Activated T-helper 1 cell treated with anti-CD3 and anti-CD28 coated beads, Interleukin-12 subunit alpha, Interleukin-12 subunit beta, Interleukin-2, Interleukin-4 antibody, amounts not matched to agents 30 ng/mL and 10 ng/mL and 1 ng/mL, durations not matched to agents 14 hours and 24 hours and 36 hours (primary cell): ENCODE measurements at regions of chr5 and their contacts with region 1.

Region 1: DNA sequence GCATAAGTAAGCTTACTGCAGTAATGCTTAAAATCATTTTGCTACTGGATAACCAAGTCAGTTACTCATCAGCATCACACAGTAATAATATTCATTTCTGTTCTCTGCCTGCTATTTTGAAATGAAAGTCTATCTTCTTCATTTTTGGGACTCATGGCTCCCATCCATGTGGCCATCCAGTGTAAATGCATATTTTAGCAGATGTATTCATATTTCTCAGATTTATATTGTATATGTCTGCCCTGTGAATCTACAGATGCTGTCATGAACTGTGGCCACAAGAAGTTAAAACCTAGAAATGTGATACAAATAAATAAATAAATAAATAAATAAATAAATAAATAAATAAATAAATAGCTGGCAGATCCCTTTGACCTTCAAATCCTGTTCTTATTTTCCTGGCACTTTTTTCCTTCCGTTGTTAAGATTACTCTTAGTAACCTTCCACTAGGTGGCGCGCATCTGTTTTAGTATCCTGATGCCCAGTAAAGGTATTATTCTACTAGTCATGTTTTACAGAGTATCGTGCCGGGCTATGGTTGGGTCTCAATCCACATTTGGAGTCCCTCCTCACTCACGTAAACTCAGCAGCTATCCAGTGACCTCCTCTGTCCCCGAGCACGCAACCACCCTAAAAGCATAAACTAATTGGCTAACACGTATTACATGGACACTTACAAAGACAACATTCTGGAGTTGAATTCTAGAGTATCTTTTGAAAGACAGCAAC is 79.2 kb upstream of the IL7R start:
- DNase-seq: peak; percentile 53
- H3K4me3 Mint-ChIP-seq: no peak overlapping the region
- H3K27ac Mint-ChIP-seq: peak overlapping the region; percentile 30
- H3K4me1 Mint-ChIP-seq: peaks cover 70% of the 10 kb centered on the region
- H3K27me3 Mint-ChIP-seq: no peaks in the 10 kb centered on the region

Region 2: DNA sequence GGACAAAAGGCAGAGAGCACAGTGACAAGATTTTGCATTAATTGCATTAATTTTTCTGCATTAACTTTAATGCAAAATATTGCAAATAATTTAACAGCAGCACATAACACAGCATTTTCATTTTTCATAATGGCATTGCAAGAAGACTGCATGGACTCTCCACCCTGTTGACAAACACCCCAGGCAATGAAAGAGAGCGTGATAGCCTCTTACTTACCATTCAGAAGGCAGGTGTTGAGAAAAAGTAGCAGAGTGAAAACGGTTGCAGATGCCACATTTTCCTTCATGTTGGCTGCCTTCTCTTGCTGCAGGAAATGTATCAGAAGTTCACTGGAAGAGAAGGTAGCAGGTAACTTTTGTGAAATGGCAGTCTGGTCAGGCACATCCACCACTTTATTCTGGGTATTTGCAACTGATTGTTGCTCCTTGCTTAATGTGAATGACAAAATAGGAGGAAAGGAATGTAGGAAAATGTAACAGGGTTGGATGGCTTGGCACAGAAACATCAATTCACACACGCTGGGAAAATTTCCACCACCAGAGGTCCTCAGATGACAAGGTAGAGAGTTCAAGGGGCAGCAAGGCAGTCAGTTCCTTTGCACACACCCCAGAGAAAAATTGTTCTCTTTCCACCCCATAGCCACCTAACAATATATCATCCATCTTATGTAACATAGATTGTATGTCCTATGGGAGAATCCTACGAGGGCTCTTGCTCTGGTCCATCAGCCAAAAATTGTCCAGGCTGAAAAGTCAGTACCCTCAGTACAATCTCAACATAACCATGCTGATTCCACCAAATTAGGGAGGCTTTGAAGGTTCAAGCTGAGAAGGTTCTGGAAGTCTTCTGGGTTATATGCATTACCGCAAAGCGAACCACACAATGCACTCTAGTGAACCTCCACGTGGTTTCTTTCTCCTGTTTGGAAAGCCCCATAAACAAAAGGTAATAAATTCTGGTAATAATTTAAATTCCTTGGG is 687.9 kb before region 1 on chr5:
- intact Hi-C with region 1: loop called (anchors 10 kb)
- DNase-seq: peak; percentile 15
- H3K4me3 Mint-ChIP-seq: no peak overlapping the region
- H3K27ac Mint-ChIP-seq: no peak overlapping the region
- H3K4me1 Mint-ChIP-seq: no peaks in the 10 kb centered on the region
- H3K27me3 Mint-ChIP-seq: peaks cover 4% of the 10 kb centered on the region

Region 3: GRCh38 chr5:35554016-35554415 is 223.5 kb before region 1 on chr5:
- intact Hi-C with region 1: no loop called
- DNase-seq: no peak
- H3K4me3 Mint-ChIP-seq: no peak overlapping the region
- H3K27ac Mint-ChIP-seq: no peak overlapping the region
- H3K4me1 Mint-ChIP-seq: no peaks in the 10 kb centered on the region
- H3K27me3 Mint-ChIP-seq: peaks cover 2% of the 10 kb centered on the region

Region 4: DNA sequence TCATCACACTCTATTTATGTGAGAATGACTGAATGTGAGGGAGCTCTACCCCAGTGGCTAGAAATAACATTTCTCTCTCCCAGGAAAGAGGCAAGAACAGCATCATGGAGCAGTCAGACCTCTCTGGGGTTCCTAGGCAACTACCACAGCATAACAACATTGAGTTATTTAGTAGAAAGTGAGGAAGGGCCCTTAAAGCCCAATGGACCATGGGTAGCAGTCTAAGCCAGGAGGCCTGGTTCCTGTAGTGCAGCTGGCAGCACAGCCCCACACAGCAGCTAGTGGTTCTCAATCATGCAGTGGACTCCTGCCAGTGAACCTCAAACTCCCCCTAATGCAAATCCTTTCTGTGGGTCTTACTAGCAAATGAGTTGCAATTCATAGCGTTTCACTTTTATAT is 104.5 kb before region 1 on chr5:
- intact Hi-C with region 1: loop called (anchors 1 kb)
- DNase-seq: peak; percentile 29
- H3K4me3 Mint-ChIP-seq: peak overlapping the region; percentile 10
- H3K27ac Mint-ChIP-seq: peak overlapping the region; percentile 59
- H3K4me1 Mint-ChIP-seq: peaks cover 65% of the 10 kb centered on the region
- H3K27me3 Mint-ChIP-seq: no peaks in the 10 kb centered on the region

Region 5: DNA sequence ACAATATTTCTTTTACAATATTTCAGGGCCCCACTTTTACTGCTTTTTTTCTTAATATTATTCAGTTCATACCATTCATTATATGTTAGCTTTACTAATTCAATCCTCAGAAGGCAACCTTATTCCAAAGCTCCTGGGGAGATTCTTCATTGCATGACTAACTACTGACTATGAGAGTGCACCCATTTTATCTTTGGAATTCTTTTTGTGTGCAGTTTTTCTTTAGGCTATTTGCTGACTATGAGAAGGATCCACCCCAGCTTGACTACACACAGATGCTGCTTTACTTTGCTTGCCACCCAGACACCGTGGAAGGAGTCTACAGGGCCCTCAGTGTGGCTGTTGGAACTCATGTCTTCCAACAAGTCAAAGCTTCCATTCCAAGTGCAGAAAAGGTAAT is 22.2 kb after region 1 on chr5:
- intact Hi-C with region 1: loop called (anchors 2 kb)
- DNase-seq: no peak
- H3K4me3 Mint-ChIP-seq: no peak overlapping the region
- H3K27ac Mint-ChIP-seq: no peak overlapping the region
- H3K4me1 Mint-ChIP-seq: peaks cover 70% of the 10 kb centered on the region
- H3K27me3 Mint-ChIP-seq: no peaks in the 10 kb centered on the region

Region 6: GRCh38 chr5:35838370-35839042 is 61.0 kb after region 1 on chr5:
- intact Hi-C with region 1: loop called (anchors 1 kb)
- DNase-seq: no peak
- H3K4me3 Mint-ChIP-seq: no peak overlapping the region
- H3K27ac Mint-ChIP-seq: peak overlapping the region; percentile 65
- H3K4me1 Mint-ChIP-seq: peaks cover 60% of the 10 kb centered on the region
- H3K27me3 Mint-ChIP-seq: no peaks in the 10 kb centered on the region